H1 (cell line): ENCODE measurements at regions of chr11 and their contacts with region 1.

Region 1: GRCh38 chr11:1572197-1573076 is at the start of gene DUSP8:
- DNase-seq: peak in 1 of 2 experiments; percentile 88
- H3K4me3 ChIP-seq: peak within 1 kb of the TSS; percentile 27 to 71 (median 34)
- H3K27ac ChIP-seq: no peak within 1 kb of the TSS
- H3K4me1 ChIP-seq: peaks cover 0 to 46% (median 31%) of the 10 kb centered on the region in 4 experiments; a peak in 6 of 7 replicates
- H3K27me3 ChIP-seq: peaks cover 18 to 54% (median 49%) of the 10 kb centered on the region in 4 experiments
- CTCF ChIP-seq: no peak
- EP300 ChIP-seq: no peak
- POLR2A ChIP-seq: no peak
- RAD21 ChIP-seq: no peak
- total RNA-seq, gene DUSP8: 2.1 and 2.8 TPM in 2 replicates

Region 2: GRCh38 chr11:1458340-1459218 is 113.9 kb before region 1 on chr11:
- CTCF ChIA-PET with region 1: no interaction called
- POLR2A ChIA-PET with region 1: no interaction called
- DNase-seq: peak in 1 of 2 experiments; percentile 19
- H3K4me3 ChIP-seq: no peak overlapping the region
- H3K27ac ChIP-seq: no peak overlapping the region
- H3K4me1 ChIP-seq: peaks cover 0 to 6% (median 2%) of the 10 kb centered on the region in 4 experiments; a peak in 2 of 7 replicates
- H3K27me3 ChIP-seq: no peaks in the 10 kb centered on the region
- CTCF ChIP-seq: peak in 1 of 3 experiments; percentile 15; a peak in 1 of 4 replicates
- EP300 ChIP-seq: no peak
- POLR2A ChIP-seq: no peak
- RAD21 ChIP-seq: no peak

Region 3: DNA sequence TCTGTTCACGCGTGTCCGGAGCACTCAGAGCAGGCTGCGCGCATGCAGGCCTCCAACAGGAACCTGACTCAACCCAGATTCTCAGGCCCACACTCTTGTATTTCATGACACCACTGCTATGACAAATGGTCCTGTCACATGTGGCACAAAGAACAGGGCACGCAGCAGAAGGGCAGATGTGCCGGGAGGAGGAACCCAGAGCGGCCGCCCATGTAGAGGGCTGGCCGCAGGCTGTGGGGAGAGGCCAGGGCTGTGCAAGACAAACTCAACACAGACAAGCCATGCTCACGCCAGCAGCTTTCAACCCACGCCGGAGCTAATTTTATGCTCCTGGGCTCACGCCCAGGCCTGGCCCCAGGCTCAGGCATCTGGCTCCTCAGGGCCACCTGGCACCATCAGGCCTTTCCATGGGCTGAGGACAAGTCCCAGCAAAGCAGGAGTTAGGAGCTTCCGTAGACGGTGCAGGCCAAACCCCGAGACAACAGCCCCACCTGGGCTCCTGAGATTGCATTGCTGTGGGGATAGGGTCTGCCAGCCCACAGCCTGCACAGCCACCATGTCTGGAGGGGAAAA is 40.3 kb before region 1 on chr11:
- CTCF ChIA-PET with region 1: interaction called, 13 read pairs
- POLR2A ChIA-PET with region 1: no interaction called
- DNase-seq: no peak
- H3K4me3 ChIP-seq: no peak overlapping the region
- H3K27ac ChIP-seq: no peak overlapping the region
- H3K4me1 ChIP-seq: peaks cover 0 to 2% (median 0%) of the 10 kb centered on the region in 4 experiments; a peak in 1 of 7 replicates
- H3K27me3 ChIP-seq: no peaks in the 10 kb centered on the region
- CTCF ChIP-seq: no peak
- EP300 ChIP-seq: no peak
- POLR2A ChIP-seq: no peak
- RAD21 ChIP-seq: no peak

Region 4: GRCh38 chr11:1546536-1547400 is 25.7 kb before region 1 on chr11:
- CTCF ChIA-PET with region 1: interaction called, 144 read pairs
- POLR2A ChIA-PET with region 1: interaction called, 34 read pairs
- DNase-seq: peak in 1 of 2 experiments; percentile 86
- H3K4me3 ChIP-seq: peak overlapping the region; percentile 26 to 64 (median 36)
- H3K27ac ChIP-seq: no peak overlapping the region
- H3K4me1 ChIP-seq: peaks cover 3 to 30% (median 13%) of the 10 kb centered on the region in 4 experiments
- H3K27me3 ChIP-seq: peaks cover 15 to 58% (median 43%) of the 10 kb centered on the region in 4 experiments
- CTCF ChIP-seq: peak in 2 of 3 experiments; percentile 70 to 87; a peak in 3 of 4 replicates
- EP300 ChIP-seq: peak; percentile 2 to 69
- POLR2A ChIP-seq: no peak
- RAD21 ChIP-seq: peak; percentile 73 to 89

Region 5: GRCh38 chr11:1586699-1587098 is 14.3 kb after region 1 on chr11:
- CTCF ChIA-PET with region 1: interaction called, 20 read pairs
- POLR2A ChIA-PET with region 1: no interaction called
- DNase-seq: no peak
- H3K4me3 ChIP-seq: no peak overlapping the region
- H3K27ac ChIP-seq: no peak overlapping the region
- H3K4me1 ChIP-seq: no peaks in the 10 kb centered on the region; a peak in 1 of 7 replicates
- H3K27me3 ChIP-seq: no peaks in the 10 kb centered on the region; a peak in 2 of 7 replicates
- CTCF ChIP-seq: no peak
- EP300 ChIP-seq: no peak
- POLR2A ChIP-seq: no peak
- RAD21 ChIP-seq: no peak